Tibial artery (tissue), 4 donors: ENCODE measurements at regions of chr10 and their contacts with region 1.

Region 1: DNA sequence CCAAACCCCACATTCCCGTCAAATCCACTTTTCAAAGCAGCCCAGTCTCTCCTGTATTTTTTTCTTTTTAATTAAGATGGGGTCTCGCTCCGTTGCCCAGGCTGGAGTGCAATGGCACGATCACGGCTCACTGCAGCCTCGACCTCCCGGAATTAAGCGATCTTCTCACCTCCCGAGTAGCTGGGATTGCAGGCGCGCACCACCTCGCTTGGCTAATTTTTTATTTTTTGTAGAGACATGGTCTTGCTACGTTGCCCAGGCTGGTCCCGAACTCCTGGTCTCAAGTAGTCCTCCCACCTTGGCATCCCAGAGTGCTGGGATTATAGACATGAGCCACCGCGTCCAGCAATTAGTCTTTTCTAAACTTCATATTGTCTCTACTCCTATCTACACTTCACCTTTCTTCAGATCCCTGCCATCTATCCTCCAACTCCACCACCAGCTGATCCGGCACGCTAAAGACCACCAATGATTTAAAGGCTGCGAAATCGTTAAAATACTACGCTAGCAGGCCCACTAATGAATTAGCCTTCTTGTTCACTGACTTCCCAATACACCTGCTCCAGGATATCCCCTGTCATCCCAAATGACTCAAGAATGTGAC is 525 bp upstream of the CHUK start:
- DNase-seq: no peak
- H3K4me3 ChIP-seq: peak overlapping the region; percentile 74 to 93
- H3K27ac ChIP-seq: peak overlapping the region; percentile 75 to 82
- H3K4me1 ChIP-seq: peaks cover 0 to 20% (median 12%) of the 10 kb centered on the region in 4 donors
- H3K27me3 ChIP-seq: no peaks in the 10 kb centered on the region
- CTCF ChIP-seq: no peak

Region 2: GRCh38 chr10:100282907-100283306 is 53.0 kb after region 1 on chr10:
- intact Hi-C with region 1: loop called (anchors 2 kb)
- DNase-seq: no peak
- H3K4me3 ChIP-seq: no peak overlapping the region
- H3K27ac ChIP-seq: no peak overlapping the region
- H3K4me1 ChIP-seq: peaks cover 0 to 36% (median 16%) of the 10 kb centered on the region in 4 donors
- H3K27me3 ChIP-seq: no peaks in the 10 kb centered on the region
- CTCF ChIP-seq: no peak

Region 3: GRCh38 chr10:100743626-100744135 is 513.8 kb after region 1 on chr10:
- intact Hi-C with region 1: no loop called
- DNase-seq: no peak
- H3K4me3 ChIP-seq: no peak overlapping the region
- H3K27ac ChIP-seq: no peak overlapping the region
- H3K4me1 ChIP-seq: peaks cover 5 to 80% (median 63%) of the 10 kb centered on the region in 4 donors
- H3K27me3 ChIP-seq: peaks cover 22 to 98% of the 10 kb centered on the region in 2 donors
- CTCF ChIP-seq: peak; percentile 31 to 36